AG04449 (cell line): ENCODE measurements at regions of chr14 and their contacts with region 1.

Region 1: GRCh38 chr14:68911594-68912227 is 67.4 kb downstream of the ACTN1 start:
- DNase-seq: no peak
- H3K4me3 ChIP-seq: no peak overlapping the region
- CTCF ChIP-seq: peak; percentile 98

Region 2: DNA sequence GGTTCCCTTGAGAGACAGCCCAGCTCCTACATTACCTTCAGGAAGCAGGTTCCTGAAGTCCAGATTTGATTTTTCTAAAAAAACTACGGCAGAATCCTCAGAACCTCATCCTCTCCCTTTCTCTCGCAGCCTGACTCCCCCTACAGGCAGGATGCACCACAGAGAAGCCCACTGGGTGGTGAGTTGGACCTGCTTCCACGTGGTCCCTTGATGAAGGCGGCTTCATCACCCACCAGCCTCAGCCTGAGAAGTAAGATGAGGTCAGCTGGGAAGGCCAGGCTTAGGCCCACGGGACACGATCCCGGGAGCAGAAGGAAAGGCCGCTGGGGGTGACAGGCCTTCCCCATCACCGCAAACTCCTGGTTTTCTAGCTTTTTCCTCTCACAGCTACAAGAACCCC is 15.6 kb before region 1 on chr14:
- CTCF ChIA-PET with region 1: interaction called, 66 read pairs
- POLR2A ChIA-PET with region 1: interaction called, 3 read pairs
- DNase-seq: no peak
- H3K4me3 ChIP-seq: no peak overlapping the region
- CTCF ChIP-seq: peak; percentile 48

Region 3: DNA sequence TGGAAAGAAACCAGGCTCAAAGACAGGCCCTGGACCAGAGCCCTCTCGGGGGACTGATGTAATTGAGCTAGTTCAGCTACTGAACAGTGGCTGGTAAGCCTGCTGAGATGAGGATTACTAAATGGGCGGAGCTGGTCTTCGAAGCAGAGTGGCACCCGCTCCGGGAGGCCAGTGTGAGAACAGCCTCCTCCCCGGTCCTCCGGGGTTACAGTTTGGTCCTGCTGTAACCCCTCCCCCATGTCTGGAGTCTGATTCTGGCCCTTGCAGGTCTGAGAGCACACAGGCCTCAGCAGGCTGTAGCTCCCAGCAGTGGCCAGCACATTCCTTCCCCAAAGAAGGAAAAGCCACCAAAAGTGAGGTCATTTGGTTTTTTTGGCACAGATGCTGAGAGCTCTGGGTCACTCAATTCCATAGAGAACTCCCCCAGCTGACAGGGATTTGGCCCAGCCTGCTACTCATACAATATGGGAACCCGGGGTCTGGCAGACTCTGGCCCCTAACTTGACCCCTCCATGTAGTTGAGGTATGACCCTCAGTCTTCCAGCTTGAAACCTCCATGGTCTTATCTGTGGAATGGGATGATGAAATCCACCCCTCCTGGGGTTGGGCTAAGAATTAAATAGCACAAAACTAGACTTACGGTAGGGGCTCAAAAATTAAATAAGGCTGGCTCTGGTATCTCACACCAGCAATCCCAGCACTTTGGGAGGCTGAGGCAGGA is 28.3 kb after region 1 on chr14:
- CTCF ChIA-PET with region 1: interaction called, 23 read pairs
- POLR2A ChIA-PET with region 1: no interaction called
- DNase-seq: peak; percentile 94
- H3K4me3 ChIP-seq: no peak overlapping the region
- CTCF ChIP-seq: no peak

Region 4: DNA sequence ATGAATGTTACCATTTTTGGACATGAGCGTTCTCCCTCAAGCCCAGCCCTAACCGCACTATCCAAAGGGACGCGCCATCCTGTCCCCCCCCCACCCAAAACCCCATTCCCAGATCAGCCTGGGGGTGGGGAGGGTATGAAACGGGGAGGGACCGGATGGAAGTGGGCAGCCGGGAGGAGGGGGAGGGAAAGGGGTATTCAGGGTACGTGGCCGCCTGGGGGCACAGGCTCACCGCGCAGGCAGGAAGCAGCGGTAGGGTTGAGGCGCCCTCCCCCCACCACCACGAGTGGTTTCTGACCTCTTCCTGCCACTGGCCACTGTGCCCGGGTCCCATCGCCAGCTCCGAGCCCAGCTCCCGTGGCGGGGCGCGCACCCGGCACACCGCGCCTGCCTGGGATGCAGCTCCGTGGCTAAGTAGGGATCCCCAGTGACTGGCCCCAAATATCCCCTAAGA is 66.0 kb after region 1 on chr14:
- CTCF ChIA-PET with region 1: interaction called, 19 read pairs
- POLR2A ChIA-PET with region 1: interaction called, 7 read pairs
- DNase-seq: peak; percentile 89
- H3K4me3 ChIP-seq: peak overlapping the region; percentile 98
- CTCF ChIP-seq: peak; percentile 40

Region 5: GRCh38 chr14:69101331-69101826 is 189.7 kb after region 1 on chr14:
- CTCF ChIA-PET with region 1: interaction called, 154 read pairs
- POLR2A ChIA-PET with region 1: no interaction called
- DNase-seq: peak; percentile 42
- H3K4me3 ChIP-seq: no peak overlapping the region
- CTCF ChIP-seq: peak; percentile 60